A549 (cell line): ENCODE measurements at regions of chr11 and their contacts with region 1.

Region 1: GRCh38 chr11:102914238-102915043 is 39.7 kb upstream of the MMP12 start:
- DNase-seq: peak; percentile 18 to 23
- ATAC-seq: peak; percentile 62 to 73; a peak in 5 of 6 replicates
- H3K4me3 ChIP-seq: no peak overlapping the region
- H3K27ac ChIP-seq: no peak overlapping the region
- H3K4me1 ChIP-seq: no peaks in the 10 kb centered on the region
- CTCF ChIP-seq: peak; percentile 47
- EP300 ChIP-seq: no peak
- POLR2A ChIP-seq: no peak
- RAD21 ChIP-seq: peak; percentile 42 to 47; a peak in 3 of 5 replicates

Region 2: DNA sequence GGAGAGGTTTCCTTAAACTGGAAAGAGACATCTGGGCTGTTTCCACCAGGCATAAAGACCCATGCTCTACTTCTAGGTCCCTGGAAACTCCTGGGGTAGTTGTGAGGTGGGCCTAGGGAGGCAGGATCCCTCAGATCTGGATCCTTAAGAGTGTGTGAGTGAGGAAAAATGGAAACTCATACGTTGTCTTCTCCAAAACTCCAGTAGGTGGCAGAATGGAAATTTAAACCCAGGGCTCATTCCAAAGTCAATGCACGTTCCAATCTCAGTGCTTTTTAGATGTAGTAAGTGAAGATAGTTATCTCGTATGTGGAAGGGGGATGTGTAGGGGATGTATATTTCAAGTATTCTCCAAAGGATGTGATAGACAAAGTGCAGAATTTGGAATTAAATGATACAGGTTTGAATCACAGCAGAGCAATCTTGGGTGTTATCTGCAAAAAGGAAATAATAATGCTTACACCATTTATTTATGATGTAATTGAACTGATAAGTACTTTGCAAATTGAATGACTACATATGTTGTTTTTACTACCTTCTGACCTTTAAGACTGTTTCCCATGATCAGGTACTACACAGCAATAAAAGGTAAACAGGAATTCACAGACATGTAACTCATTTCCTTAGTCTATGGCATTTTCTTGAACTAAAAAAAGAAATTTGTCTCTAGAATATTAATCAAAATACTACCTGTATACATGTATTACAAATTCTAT is 103.3 kb before region 1 on chr11:
- CTCF ChIA-PET with region 1: no interaction called
- POLR2A ChIA-PET with region 1: no interaction called
- DNase-seq: peak; percentile 6 to 12
- ATAC-seq: peak; percentile 54 to 76; a peak in 3 of 6 replicates
- H3K4me3 ChIP-seq: no peak overlapping the region
- H3K27ac ChIP-seq: no peak overlapping the region
- H3K4me1 ChIP-seq: no peaks in the 10 kb centered on the region
- CTCF ChIP-seq: peak; percentile 43; the same call in 2 of the 3 replicates
- EP300 ChIP-seq: no peak
- POLR2A ChIP-seq: no peak
- RAD21 ChIP-seq: peak; percentile 33 to 35; a peak in 4 of 5 replicates

Region 3: DNA sequence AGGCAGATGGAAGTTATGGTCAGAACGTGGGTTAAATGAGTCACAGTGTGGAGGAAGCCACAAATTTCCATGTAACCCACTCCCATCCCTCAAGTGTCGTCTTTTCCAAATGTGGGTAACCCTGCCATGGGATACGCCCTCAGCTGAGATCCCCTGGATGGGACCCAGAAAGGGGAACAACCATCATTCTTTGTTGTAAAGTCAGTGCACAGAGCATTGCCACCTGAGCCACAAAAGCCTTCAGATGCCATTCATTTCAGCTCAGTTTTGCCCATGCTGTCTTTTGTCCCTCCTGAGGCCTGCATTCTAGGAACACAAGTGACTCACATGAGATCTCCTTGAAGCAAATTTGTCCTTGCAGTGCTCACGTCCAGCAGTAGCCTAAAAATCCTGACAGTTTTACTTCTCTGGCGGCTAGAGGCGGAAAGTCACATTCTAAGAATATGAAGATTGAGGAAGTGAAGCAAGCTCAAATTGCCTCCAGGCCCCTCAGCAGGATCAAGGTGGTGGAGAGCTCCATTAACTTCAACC is 10.5 kb after region 1 on chr11:
- CTCF ChIA-PET with region 1: interaction called, 14 read pairs
- POLR2A ChIA-PET with region 1: no interaction called
- DNase-seq: no peak
- ATAC-seq: no peak
- H3K4me3 ChIP-seq: no peak overlapping the region
- H3K27ac ChIP-seq: no peak overlapping the region
- H3K4me1 ChIP-seq: no peaks in the 10 kb centered on the region
- CTCF ChIP-seq: no peak
- EP300 ChIP-seq: no peak
- POLR2A ChIP-seq: no peak
- RAD21 ChIP-seq: no peak

Region 4: DNA sequence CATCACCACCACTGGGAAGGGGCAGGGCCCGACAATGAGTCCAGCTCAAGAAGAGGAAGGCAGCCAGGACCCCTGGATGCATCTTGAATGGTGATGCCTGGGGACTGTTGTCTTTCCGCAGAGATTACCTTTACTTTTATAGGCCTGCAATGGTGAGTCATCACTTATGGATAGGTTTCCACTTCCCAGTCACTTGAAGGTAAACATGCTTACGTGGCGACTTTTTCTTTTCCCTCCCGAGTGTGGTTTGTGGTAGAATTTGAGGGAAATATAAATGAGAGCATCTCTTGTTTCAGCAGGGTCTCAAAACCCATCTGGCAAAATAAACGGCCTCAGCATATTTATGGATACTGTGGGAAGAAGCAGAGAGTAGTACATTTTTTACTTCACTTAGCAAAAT is 41.2 kb after region 1 on chr11 and contains the start of gene MMP13:
- CTCF ChIA-PET with region 1: no interaction called
- POLR2A ChIA-PET with region 1: no interaction called
- DNase-seq: no peak
- ATAC-seq: no peak
- H3K4me3 ChIP-seq: no peak within 1 kb of the TSS
- H3K27ac ChIP-seq: no peak within 1 kb of the TSS
- H3K4me1 ChIP-seq: peaks cover 3% of the 10 kb centered on the region; the same call in 2 of the 3 replicates
- CTCF ChIP-seq: no peak
- EP300 ChIP-seq: no peak
- POLR2A ChIP-seq: no peak
- RAD21 ChIP-seq: no peak
- polyA plus RNA-seq, gene MMP13: 0.04 TPM in 1 of 2 replicates, not detected in the other